ENCODE measurements at regions of chr6 and their contacts with region 1.

Region 1: GRCh38 chr6:31911826-31912585 is 10.1 kb upstream of the ZBTB12 start:
- DNase-seq: no peak
- ATAC-seq: no peak
- H3K4me3 ChIP-seq: no peak overlapping the region
- H3K27ac ChIP-seq: peak overlapping the region; percentile 54; the same call in 1 of the 2 replicates
- H3K4me1 ChIP-seq: peaks cover 7% of the 10 kb centered on the region
- H3K27me3 ChIP-seq: no peaks in the 10 kb centered on the region
- CTCF ChIP-seq: no peak
- POLR2A ChIP-seq: no peak
- RAD21 ChIP-seq: no peak

Region 2: DNA sequence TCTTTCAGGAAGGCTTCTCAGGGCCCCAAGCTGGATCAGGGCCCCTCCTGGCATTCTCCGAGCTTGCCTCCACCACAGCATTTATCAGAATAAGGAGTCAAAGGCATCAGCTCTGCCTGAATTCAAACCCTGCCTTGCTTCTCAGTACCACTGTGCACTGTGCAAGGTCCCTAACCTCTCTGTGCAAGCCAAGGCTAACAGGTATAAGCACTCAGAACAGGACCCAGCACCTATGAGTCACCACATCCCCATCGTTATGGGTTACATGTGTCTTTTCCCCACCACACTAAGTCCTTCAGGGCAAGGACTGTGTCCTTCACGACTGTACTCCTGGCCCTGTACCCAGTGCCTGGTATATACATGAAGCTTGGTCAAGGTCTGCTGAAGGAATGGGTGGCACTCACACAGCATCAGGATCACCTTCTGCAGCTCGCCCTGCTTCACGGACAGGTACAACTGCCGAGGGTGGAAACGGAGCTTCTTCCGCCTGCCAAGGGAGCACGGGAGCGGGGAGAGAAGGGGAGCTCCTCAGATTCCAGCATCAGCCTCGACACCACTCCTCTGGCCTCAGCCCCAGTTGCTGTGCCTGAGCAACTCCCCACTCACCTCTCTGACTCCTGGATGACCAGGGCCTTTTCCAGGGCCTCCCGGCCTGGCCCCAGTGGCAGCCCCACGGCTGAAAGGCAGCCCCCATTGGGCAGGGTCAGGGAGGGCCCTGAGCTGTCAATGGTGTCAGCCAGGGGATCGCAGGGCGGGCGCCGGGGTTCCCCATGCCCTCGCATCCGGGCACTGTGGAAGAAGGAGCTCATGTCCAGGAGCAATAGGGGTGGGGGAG is 24.6 kb before region 1 on chr6:
- CTCF ChIA-PET with region 1: no interaction called
- POLR2A ChIA-PET with region 1: no interaction called
- dilution Hi-C with region 1: no loop called
- in situ Hi-C with region 1: no loop called
- intact Hi-C with region 1: no loop called
- DNase-seq: no peak
- ATAC-seq: no peak
- H3K4me3 ChIP-seq: no peak overlapping the region
- H3K27ac ChIP-seq: no peak overlapping the region
- H3K4me1 ChIP-seq: no peaks in the 10 kb centered on the region
- H3K27me3 ChIP-seq: no peaks in the 10 kb centered on the region
- CTCF ChIP-seq: no peak
- POLR2A ChIP-seq: no peak
- RAD21 ChIP-seq: no peak

Region 3: GRCh38 chr6:31897612-31898382 is 14.2 kb before region 1 on chr6 and contains the start of gene EHMT2:
- CTCF ChIA-PET with region 1: no interaction called
- POLR2A ChIA-PET with region 1: no interaction called
- dilution Hi-C with region 1: no loop called
- in situ Hi-C with region 1: no loop called
- intact Hi-C with region 1: no loop called
- DNase-seq: peak; percentile 68
- ATAC-seq: peak; percentile 48
- H3K4me3 ChIP-seq: peak within 1 kb of the TSS; percentile 92
- H3K27ac ChIP-seq: peak within 1 kb of the TSS; percentile 80
- H3K4me1 ChIP-seq: peaks cover 10% of the 10 kb centered on the region
- H3K27me3 ChIP-seq: no peaks in the 10 kb centered on the region
- CTCF ChIP-seq: no peak
- POLR2A ChIP-seq: no peak
- RAD21 ChIP-seq: no peak; the same call in none of the 2 replicates
- total RNA-seq, gene EHMT2: 36.4 and 38.0 TPM in 2 replicates

Region 4: GRCh38 chr6:31945507-31946369 is 33.7 kb after region 1 on chr6 and contains the start of gene CFB:
- CTCF ChIA-PET with region 1: no interaction called
- POLR2A ChIA-PET with region 1: no interaction called
- dilution Hi-C with region 1: no loop called
- in situ Hi-C with region 1: loop called (anchors 5 kb)
- intact Hi-C with region 1: no loop called
- DNase-seq: peak; percentile 86
- ATAC-seq: peak; percentile 95
- H3K4me3 ChIP-seq: peak within 1 kb of the TSS; percentile 3; the same call in 1 of the 2 replicates
- H3K27ac ChIP-seq: peak within 1 kb of the TSS; percentile 64
- H3K4me1 ChIP-seq: peaks cover 22% of the 10 kb centered on the region
- H3K27me3 ChIP-seq: no peaks in the 10 kb centered on the region
- CTCF ChIP-seq: no peak
- POLR2A ChIP-seq: no peak
- RAD21 ChIP-seq: no peak
- total RNA-seq, gene CFB: 1.4 and 1.8 TPM in 2 replicates